ENCODE measurements at regions of chr14 and their contacts with region 1.

Region 1: GRCh38 chr14:32661216-32661615 is 277.5 kb upstream of the NPAS3 start:
- DNase-seq: no peak
- ATAC-seq: peak; percentile 65

Region 2: DNA sequence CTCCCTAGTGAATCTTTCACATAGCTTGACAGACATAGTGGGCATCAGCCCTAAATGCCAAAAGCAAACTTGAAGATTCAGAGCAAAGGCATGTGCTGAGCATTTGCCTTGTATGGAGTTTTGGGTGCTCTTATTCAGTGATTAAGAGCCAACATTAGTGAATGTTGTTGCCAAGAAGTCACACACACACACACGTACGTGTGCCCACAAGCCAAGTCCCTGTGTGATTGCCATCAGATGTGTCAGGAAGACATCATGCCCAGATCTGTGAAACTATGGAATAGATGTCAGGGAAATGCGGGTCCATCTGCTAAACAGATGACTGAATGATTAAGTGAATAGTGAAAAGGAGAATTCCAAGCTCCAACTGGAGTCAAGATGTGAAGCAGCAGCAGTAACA is 183.2 kb before region 1 on chr14:
- intact Hi-C with region 1: no loop called
- DNase-seq: no peak
- ATAC-seq: no peak

Region 3: DNA sequence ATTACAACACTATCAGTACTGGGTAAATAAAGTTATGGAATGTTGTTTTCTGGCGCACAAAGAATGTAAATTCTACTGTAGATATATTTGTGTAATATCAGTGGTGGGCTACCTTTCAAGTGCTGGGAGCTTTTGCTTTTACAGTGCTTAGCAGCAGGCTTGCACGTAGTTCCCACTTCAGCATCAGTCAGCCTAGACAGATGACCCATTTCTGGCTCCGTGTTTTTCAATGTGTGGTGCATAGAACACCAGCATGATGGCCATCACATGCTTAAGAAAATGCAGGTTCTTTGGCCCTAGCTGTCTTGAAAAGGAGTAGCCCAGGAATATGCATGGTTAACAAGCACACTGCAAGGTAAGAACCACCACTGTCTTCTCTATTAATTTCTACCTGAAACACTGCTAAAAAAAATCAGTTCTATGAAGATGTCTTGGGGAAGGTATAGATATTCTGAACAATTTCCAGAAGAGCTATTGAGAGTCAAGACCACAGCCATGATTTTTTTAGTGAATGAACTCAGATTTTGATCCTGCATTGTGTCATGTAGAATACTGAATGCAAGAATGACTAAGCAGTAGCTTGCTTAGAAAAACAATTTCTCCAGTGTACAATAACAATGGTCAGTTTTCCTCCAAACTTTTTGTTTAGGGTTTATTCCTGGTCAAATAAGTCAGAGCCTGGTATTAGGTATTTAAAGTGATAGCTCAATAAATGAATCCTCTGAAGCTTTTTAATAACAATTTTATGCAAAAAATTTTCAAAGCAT is 136.4 kb before region 1 on chr14:
- intact Hi-C with region 1: no loop called
- DNase-seq: no peak
- ATAC-seq: peak; percentile 12

Region 4: GRCh38 chr14:32611752-32612151 is 49.5 kb before region 1 on chr14:
- intact Hi-C with region 1: no loop called
- DNase-seq: no peak
- ATAC-seq: peak; percentile 36

Region 5: DNA sequence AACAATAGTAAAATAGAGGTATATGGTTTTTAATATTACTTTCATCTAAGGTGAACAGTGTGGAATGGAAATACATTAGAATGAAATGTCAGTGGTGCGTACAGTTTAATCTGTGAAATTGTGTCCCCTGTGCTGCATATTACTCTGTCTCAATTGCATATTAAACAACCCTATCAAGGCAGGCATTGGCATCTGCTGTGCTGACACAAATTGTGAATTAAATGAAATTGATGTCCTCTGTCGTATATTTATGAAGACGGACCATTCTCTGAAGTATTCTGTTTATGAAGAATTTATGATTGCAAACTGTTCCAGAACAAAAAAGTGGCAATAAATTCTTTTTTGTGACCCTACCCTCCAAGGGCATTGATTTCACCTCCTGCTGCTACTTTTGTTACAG is 73.0 kb after region 1 on chr14:
- intact Hi-C with region 1: loop called (anchors 2 kb)
- DNase-seq: no peak
- ATAC-seq: no peak